HepG2 (cell line): ENCODE measurements at regions of chr18 and their contacts with region 1.

Region 1: GRCh38 chr18:63518178-63519012 is 23.8 kb upstream of the SERPINB12 start:
- DNase-seq: peak; percentile 75
- ATAC-seq: peak; percentile 98
- H3K4me3 ChIP-seq: no peak overlapping the region
- H3K27ac ChIP-seq: no peak overlapping the region
- H3K4me1 ChIP-seq: no peaks in the 10 kb centered on the region
- H3K27me3 ChIP-seq: peaks cover 0 to 11% of the 10 kb centered on the region in 2 experiments; a peak in 2 of 5 replicates
- CTCF ChIP-seq: peak; percentile 89
- EP300 ChIP-seq: no peak
- POLR2A ChIP-seq: no peak
- RAD21 ChIP-seq: peak; percentile 54; the same call in 1 of the 2 replicates

Region 2: DNA sequence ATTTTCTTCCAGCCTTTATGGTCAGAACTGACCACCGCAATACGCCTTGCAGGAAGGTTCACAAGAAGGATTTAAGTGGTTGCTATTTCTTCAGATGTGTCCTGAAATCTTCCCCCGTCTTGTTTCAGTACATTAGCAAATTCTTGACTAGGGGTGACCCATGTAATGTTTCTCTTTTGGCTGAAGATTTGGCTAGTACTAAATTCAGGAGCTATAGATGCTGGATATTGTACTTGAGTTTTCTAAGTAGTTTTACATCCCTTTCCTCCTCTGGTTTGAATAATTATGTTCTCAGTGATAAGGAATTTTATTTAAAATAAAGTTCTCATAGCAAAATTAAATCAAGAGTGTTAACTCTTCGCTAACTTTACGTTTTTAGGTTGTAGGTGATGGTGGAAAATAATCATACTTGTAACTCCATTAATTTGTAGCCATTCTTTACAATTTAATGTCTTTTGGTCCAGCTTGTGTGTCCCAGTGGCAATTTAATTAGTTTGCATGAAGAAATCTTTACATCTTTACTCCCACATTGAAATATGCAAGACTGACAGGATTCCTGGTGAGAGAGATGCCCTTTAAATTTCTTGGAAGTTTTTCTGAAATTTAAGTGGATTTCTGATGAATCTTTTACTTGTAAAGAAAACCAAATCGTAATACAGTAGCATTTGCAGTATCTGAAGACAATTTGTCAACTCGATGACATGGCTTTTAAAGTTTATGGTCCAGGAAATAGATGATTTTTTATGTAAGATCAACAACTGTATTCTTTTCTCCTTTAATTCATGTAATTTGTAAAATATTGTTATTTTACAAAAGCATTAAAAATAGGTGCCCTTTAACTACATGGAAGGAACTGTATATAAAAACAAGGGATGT is 800.2 kb before region 1 on chr18:
- CTCF ChIA-PET with region 1: no interaction called
- POLR2A ChIA-PET with region 1: no interaction called
- in situ Hi-C with region 1: no loop called
- intact Hi-C with region 1: no loop called
- DNase-seq: no peak
- ATAC-seq: no peak
- H3K4me3 ChIP-seq: peak overlapping the region; percentile 72 to 86 (median 78)
- H3K27ac ChIP-seq: peak overlapping the region; percentile 53
- H3K4me1 ChIP-seq: peaks cover 31% of the 10 kb centered on the region
- H3K27me3 ChIP-seq: no peaks in the 10 kb centered on the region; a peak in 1 of 5 replicates
- CTCF ChIP-seq: no peak
- EP300 ChIP-seq: no peak
- POLR2A ChIP-seq: no peak
- RAD21 ChIP-seq: no peak

Region 3: DNA sequence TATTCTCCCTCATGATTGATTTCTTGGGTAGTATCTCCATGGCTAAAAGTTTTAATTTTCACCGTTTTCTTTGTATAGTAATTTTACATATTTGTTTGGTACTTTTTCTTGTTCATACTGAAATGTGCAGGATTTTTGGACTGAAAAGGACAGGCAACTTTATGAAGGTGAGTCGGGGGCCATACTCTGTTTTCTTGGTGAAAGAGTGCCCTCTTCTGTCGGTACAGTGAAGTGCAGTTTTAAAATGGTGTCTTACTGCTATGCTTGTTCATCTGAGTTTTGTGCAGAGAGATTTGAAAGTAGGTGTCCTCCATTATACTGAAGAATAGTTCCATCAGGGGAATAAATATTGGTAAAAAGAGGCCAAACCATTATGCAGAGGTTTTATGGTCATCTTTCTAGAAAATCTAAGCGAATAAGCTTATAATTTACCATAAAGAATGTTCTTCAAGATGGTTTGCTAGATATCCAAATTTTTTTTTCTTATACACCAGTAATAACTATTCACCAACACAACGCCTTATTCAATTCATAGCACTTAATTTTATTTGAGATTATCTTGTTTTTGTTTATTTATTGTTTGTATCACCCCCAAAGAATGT is 60.1 kb after region 1 on chr18:
- CTCF ChIA-PET with region 1: interaction called, 26 read pairs
- POLR2A ChIA-PET with region 1: no interaction called
- in situ Hi-C with region 1: loop called (anchors 5 kb)
- intact Hi-C with region 1: loop called (anchors 1 kb)
- DNase-seq: peak; percentile 23
- ATAC-seq: peak; percentile 69
- H3K4me3 ChIP-seq: no peak overlapping the region
- H3K27ac ChIP-seq: no peak overlapping the region
- H3K4me1 ChIP-seq: no peaks in the 10 kb centered on the region
- H3K27me3 ChIP-seq: no peaks in the 10 kb centered on the region
- CTCF ChIP-seq: peak; percentile 78
- EP300 ChIP-seq: no peak
- POLR2A ChIP-seq: no peak
- RAD21 ChIP-seq: no peak

Region 4: GRCh38 chr18:63676526-63676925 is 158.1 kb after region 1 on chr18:
- CTCF ChIA-PET with region 1: no interaction called
- POLR2A ChIA-PET with region 1: no interaction called
- in situ Hi-C with region 1: no loop called
- intact Hi-C with region 1: loop called (anchors 1 kb)
- DNase-seq: no peak
- ATAC-seq: peak; percentile 93
- H3K4me3 ChIP-seq: no peak overlapping the region
- H3K27ac ChIP-seq: no peak overlapping the region
- H3K4me1 ChIP-seq: peaks cover 7% of the 10 kb centered on the region
- H3K27me3 ChIP-seq: no peaks in the 10 kb centered on the region
- CTCF ChIP-seq: peak; percentile 38
- EP300 ChIP-seq: no peak
- POLR2A ChIP-seq: no peak
- RAD21 ChIP-seq: no peak

Region 5: GRCh38 chr18:63741769-63742168 is 223.4 kb after region 1 on chr18:
- CTCF ChIA-PET with region 1: no interaction called
- POLR2A ChIA-PET with region 1: no interaction called
- in situ Hi-C with region 1: no loop called
- intact Hi-C with region 1: loop called (anchors 2 kb)
- DNase-seq: no peak
- ATAC-seq: no peak
- H3K4me3 ChIP-seq: no peak overlapping the region
- H3K27ac ChIP-seq: no peak overlapping the region
- H3K4me1 ChIP-seq: no peaks in the 10 kb centered on the region
- H3K27me3 ChIP-seq: no peaks in the 10 kb centered on the region
- CTCF ChIP-seq: no peak
- EP300 ChIP-seq: no peak
- POLR2A ChIP-seq: no peak
- RAD21 ChIP-seq: no peak

Region 6: DNA sequence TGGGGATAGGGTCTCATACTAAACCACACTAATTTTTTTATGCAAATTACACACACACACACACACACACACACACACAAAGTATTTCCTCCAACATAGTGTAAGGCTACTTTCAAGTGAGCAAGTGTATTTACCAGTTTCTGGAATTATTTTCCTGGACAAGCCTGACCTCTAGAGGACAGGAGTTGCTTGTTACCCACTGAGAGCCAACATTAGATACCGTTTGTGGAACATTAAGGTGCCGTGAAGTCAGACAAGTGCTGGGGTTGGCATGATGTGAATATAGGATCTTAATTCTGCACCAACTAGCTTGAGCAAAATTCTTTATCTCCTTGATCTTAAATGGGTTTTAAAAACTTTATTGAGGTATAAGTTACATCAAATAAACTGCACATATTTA is 329.8 kb after region 1 on chr18:
- CTCF ChIA-PET with region 1: interaction called, 7 read pairs
- POLR2A ChIA-PET with region 1: no interaction called
- in situ Hi-C with region 1: loop called (anchors 5 kb)
- intact Hi-C with region 1: loop called (anchors 1 kb)
- DNase-seq: peak; percentile 39
- ATAC-seq: peak; percentile 82
- H3K4me3 ChIP-seq: no peak overlapping the region
- H3K27ac ChIP-seq: no peak overlapping the region
- H3K4me1 ChIP-seq: no peaks in the 10 kb centered on the region
- H3K27me3 ChIP-seq: no peaks in the 10 kb centered on the region
- CTCF ChIP-seq: peak; percentile 62
- EP300 ChIP-seq: no peak
- POLR2A ChIP-seq: no peak
- RAD21 ChIP-seq: no peak

Region 7: DNA sequence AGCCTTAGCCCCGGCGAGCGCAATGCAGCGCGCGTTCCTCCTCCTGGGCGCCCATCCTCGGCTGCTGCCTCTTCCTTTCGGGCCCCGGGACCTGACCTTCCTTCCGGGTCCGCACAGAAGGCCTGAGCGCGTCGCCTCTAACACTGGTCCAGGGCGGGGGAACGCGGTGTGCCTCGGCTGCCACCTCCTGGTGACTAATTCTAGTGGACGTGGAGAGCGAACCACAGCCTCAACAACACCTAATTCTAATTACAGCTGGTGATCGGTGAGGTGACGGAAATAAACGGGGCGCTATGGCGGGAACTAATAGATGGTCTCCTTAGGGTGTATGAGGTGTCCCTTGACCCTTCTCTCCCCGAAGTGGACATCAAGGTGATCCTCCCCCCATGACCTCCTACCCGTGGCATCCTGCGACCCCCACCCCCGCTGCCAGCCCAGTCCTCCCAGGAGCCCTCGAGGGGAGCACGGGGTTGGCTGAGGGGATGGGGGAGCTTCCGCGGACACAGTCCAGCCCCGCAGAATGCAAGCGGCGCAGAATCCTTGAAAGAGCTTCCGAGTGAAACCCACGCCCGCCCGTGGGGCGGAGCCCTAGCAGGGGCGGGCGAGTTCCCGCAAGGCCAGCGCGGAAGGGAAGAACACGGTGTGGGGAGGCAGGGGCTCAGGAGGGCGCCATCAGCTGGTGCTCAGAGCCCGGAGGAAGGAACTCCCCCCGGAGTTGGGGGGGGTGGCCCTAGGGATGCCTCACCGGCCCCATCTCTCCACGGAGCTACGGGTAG is 417.9 kb after region 1 on chr18:
- CTCF ChIA-PET with region 1: interaction called, 8 read pairs
- POLR2A ChIA-PET with region 1: no interaction called
- in situ Hi-C with region 1: no loop called
- intact Hi-C with region 1: loop called (anchors 1 kb)
- DNase-seq: peak; percentile 55
- ATAC-seq: peak; percentile 100
- H3K4me3 ChIP-seq: peak overlapping the region in 1 of 3 experiments; percentile 28; a peak in 1 of 6 replicates
- H3K27ac ChIP-seq: no peak overlapping the region
- H3K4me1 ChIP-seq: no peaks in the 10 kb centered on the region
- H3K27me3 ChIP-seq: 0 out of 5 replicates have a peak, but pooled peaks cover 0 to 9% of the 10 kb centered on the region in 2 experiments
- CTCF ChIP-seq: peak; percentile 89
- EP300 ChIP-seq: no peak
- POLR2A ChIP-seq: no peak
- RAD21 ChIP-seq: peak; percentile 69